ENCODE measurements at regions of chr7 and their contacts with region 1.

Region 1: DNA sequence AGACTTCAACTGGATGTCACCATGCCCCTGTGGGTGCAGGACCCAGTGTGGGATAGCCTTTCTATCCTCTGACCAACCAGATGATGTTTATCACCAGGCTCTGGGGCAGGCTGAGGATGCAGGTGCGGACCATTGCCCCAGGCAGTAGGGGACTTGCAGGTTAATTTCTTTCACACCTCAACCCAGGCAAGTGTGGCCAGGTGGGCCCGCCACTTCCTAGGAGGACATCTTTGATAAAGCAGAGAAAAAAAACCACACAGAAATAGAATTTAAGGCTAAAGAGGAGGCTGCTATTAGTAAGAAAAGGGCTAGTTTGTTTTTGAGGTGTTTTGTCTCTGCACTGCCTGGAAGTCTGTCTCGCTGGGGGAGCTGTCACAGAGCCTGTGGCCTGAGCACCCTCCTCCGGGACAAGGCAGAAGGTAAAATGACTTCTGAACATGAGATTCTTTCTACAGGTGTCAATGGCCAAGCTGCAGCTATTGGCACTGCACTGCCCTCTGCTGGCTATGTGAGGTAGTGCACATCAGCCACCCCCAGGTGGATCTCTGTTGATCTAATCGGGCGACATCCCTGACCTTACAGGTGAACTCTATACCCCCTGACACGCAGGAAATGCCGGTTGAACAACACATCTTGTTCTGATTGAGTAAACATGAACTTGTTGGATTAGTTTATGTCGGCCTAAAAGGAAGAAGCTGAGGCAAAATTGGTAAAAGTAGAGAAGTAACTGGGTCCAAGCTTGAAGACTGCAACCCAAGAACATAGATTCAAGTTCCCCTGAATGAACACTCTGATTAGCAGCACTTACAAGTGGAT is 21.0 kb downstream of the UPP1 start:
- DNase-seq: peak; percentile 94
- H3K4me3 Mint-ChIP-seq: no peak overlapping the region
- H3K27ac Mint-ChIP-seq: peak overlapping the region; percentile 74
- H3K4me1 Mint-ChIP-seq: peaks cover 21% of the 10 kb centered on the region
- H3K27me3 Mint-ChIP-seq: no peaks in the 10 kb centered on the region

Region 2: DNA sequence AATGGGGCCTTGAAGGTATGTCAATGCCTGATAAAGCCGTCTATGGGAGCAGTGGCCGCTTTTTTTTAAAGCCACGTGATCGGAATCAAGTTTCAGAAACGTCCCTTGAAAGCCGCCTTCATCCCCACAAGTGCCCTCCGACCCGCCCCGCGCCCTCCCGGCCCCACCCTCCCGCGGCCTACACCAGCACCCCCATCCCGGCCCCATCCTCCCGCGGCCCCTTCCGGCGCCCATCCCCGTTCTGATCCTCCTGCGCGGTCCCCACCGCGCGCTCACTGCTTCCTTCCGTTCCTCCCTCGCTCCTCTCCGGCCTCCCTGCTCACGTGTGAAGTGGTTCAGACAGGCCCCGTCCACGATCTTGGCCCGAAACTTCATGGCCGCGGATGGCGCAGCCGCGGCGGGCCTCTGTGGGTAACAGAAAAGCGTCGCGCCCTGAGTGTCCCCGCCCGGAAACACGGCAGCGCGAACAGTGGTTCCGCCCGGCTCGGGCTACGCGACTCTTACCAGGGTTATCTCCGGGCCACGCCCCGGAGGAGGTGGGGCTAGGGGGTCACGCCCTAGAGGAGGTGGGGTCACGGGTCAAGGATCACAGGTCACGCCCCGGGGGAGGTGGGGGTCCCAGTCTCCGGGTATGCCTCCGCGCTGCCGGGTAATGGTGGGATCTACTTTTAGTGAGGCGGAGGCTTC is 130.8 kb before region 1 on chr7 and contains the start of gene HUS1:
- CTCF ChIA-PET with region 1: interaction called, 11 read pairs
- DNase-seq: peak; percentile 97
- H3K4me3 Mint-ChIP-seq: peak within 1 kb of the TSS; percentile 90
- H3K27ac Mint-ChIP-seq: peak within 1 kb of the TSS; percentile 96
- H3K4me1 Mint-ChIP-seq: peaks cover 25% of the 10 kb centered on the region
- H3K27me3 Mint-ChIP-seq: no peaks in the 10 kb centered on the region

Region 3: DNA sequence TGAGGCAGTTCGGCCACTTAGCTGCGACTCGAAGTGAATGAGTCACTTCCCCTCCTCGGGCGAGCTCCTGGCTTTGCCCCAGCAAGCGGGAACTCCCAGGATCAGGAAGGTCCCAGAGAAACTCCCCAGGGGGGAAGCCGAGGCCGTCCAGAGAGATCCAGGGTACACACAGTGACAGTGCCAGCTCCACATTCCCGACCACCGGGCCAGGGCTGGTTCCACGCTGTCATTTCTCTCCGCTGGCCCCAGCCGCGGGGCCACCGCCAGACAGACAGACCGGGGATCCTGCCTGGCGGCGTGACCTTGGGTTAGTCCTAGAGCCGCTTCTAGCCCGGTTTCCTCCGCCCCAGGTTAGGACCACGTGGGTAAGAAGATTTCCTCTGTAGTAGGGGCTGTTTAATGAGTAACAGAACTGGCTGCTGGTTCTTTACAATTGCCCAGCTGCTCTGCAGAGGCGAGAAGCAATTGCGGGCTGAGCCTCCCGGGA is 21.5 kb before region 1 on chr7:
- CTCF ChIA-PET with region 1: interaction called, 13 read pairs
- DNase-seq: no peak
- H3K4me3 Mint-ChIP-seq: peak overlapping the region; percentile 93
- H3K27ac Mint-ChIP-seq: peak overlapping the region; percentile 97
- H3K4me1 Mint-ChIP-seq: peaks cover 76% of the 10 kb centered on the region
- H3K27me3 Mint-ChIP-seq: no peaks in the 10 kb centered on the region

Measured in activated naive CD4-positive, alpha-beta T cell treated with anti-CD3 and anti-CD28 coated beads, Interleukin-2, amount 10 ng/mL, durations not matched to agents 7 days and 5 days (primary cell).